T-cell (primary cell): ENCODE measurements at regions of chr5 and their contacts with region 1.

Region 1: DNA sequence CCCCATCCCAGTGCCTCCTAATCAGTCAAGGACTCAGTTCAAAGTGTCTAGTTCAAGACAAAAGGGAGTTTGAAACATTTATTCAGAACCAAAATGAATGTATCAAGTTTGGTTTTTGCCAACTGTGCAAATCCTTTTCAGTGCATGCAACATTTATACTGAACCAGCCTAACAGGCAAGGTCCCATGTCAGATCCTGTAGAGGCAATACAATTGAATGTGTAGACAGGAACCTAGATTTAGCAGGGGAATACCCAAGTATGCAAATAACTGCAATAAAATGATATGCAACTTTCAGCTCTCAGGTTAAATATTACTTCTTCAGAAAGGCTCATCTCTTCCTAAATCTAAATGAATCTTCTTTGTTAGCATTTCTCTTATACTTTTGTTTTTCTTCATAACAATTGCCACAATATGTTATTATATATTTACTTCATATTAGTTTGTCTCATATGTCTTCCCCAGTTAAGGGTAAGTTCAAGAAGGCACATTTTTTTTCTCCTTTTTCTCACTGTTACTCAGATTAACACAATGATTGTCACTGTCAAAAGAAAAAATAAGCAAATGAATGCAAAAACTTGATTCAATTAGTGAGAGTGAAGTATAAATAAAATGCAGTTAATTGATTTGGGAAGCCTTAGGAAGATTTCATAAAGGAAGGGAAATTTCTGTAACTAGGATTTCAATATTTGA is 163.9 kb upstream of the RASA1 start:
- DNase-seq: no peak
- ATAC-seq: no peak
- H3K4me3 ChIP-seq: no peak overlapping the region
- H3K4me3 Mint-ChIP-seq: no peak overlapping the region
- H3K27ac ChIP-seq: no peak overlapping the region
- H3K27ac Mint-ChIP-seq: peak overlapping the region in 1 of 2 donors; percentile 44
- H3K4me1 ChIP-seq: peaks cover 2% of the 10 kb centered on the region in 2 experiments
- H3K4me1 Mint-ChIP-seq: peaks cover 10 to 16% (median 16%) of the 10 kb centered on the region in 3 donors
- H3K27me3 ChIP-seq: no peaks in the 10 kb centered on the region
- H3K27me3 Mint-ChIP-seq: no peaks in the 10 kb centered on the region

Region 2: GRCh38 chr5:87048156-87048555 is 55.6 kb before region 1 on chr5:
- CTCF ChIA-PET with region 1: no interaction called
- POLR2A ChIA-PET with region 1: no interaction called
- DNase-seq: peak in 1 of 35 experiments; percentile 2
- ATAC-seq: no peak
- H3K4me3 ChIP-seq: no peak overlapping the region
- H3K4me3 Mint-ChIP-seq: no peak overlapping the region
- H3K27ac ChIP-seq: no peak overlapping the region
- H3K27ac Mint-ChIP-seq: no peak overlapping the region
- H3K4me1 ChIP-seq: no peaks in the 10 kb centered on the region
- H3K4me1 Mint-ChIP-seq: peaks cover 0 to 2% (median 0%) of the 10 kb centered on the region in 3 donors
- H3K27me3 ChIP-seq: no peaks in the 10 kb centered on the region
- H3K27me3 Mint-ChIP-seq: no peaks in the 10 kb centered on the region

Region 3: DNA sequence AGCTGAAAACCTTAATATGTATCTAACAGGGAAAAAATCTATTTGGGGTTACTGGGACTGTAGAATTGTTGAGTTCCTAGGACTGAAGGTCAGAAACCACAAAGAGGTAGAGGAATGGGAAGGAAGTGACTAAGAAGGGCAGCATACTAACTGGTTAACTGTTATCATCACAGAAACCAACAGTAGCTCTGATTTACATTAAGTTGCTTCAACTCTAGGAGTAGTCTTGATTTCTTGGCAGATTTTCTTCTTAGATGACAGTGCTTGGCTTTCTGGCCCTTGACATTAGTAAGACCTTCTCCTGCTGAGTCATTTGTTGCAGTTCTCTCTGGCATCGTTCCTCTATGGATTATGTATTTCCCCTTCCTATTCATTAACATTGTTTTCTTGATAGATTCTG is 47.8 kb after region 1 on chr5:
- CTCF ChIA-PET with region 1: no interaction called
- POLR2A ChIA-PET with region 1: no interaction called
- DNase-seq: no peak
- ATAC-seq: no peak
- H3K4me3 ChIP-seq: no peak overlapping the region
- H3K4me3 Mint-ChIP-seq: no peak overlapping the region
- H3K27ac ChIP-seq: no peak overlapping the region
- H3K27ac Mint-ChIP-seq: no peak overlapping the region
- H3K4me1 ChIP-seq: no peaks in the 10 kb centered on the region
- H3K4me1 Mint-ChIP-seq: peaks cover 2 to 8% (median 5%) of the 10 kb centered on the region in 3 donors
- H3K27me3 ChIP-seq: no peaks in the 10 kb centered on the region
- H3K27me3 Mint-ChIP-seq: no peaks in the 10 kb centered on the region

Region 4: GRCh38 chr5:87164409-87164808 is 60.7 kb after region 1 on chr5:
- CTCF ChIA-PET with region 1: no interaction called
- POLR2A ChIA-PET with region 1: interaction called in 1 of 2 experiments, 14 read pairs
- DNase-seq: no peak
- ATAC-seq: no peak
- H3K4me3 ChIP-seq: no peak overlapping the region
- H3K4me3 Mint-ChIP-seq: no peak overlapping the region
- H3K27ac ChIP-seq: no peak overlapping the region
- H3K27ac Mint-ChIP-seq: no peak overlapping the region
- H3K4me1 ChIP-seq: peaks cover 0 to 2% of the 10 kb centered on the region in 2 experiments
- H3K4me1 Mint-ChIP-seq: peaks cover 0 to 3% (median 3%) of the 10 kb centered on the region in 3 donors
- H3K27me3 ChIP-seq: no peaks in the 10 kb centered on the region
- H3K27me3 Mint-ChIP-seq: no peaks in the 10 kb centered on the region

Region 5: DNA sequence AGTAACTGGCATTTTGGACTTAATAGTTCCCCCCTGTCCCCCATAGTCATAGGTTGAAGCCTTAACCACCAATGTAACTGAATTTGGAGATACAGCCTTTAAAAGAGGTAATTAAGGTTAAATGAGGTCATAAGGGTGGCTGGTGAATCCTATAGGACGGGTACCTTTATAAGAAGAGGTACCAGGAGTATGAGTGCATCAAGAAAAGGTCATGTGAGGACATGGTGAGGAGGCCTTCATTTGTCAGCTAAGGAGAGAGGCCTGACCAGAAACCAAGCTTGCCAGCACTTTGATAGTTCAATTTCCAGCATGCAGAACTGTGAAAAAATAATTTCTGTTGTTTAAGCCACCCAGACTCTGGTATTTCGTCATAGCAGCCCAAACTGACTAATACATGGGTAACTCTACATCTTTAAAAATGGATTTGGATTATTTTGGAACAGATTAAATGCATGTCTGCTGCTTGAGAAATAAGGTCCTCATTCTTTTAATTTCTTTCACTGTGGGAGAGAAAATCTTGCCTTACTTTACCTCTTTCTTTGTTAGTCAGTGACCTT is 173.6 kb after region 1 on chr5:
- CTCF ChIA-PET with region 1: no interaction called
- POLR2A ChIA-PET with region 1: no interaction called
- DNase-seq: no peak
- ATAC-seq: no peak
- H3K4me3 ChIP-seq: no peak overlapping the region
- H3K4me3 Mint-ChIP-seq: no peak overlapping the region
- H3K27ac ChIP-seq: no peak overlapping the region
- H3K27ac Mint-ChIP-seq: peak overlapping the region; percentile 64 to 71
- H3K4me1 ChIP-seq: peaks cover 8% of the 10 kb centered on the region in 2 experiments
- H3K4me1 Mint-ChIP-seq: peaks cover 71 to 79% (median 78%) of the 10 kb centered on the region in 3 donors
- H3K27me3 ChIP-seq: no peaks in the 10 kb centered on the region
- H3K27me3 Mint-ChIP-seq: no peaks in the 10 kb centered on the region

Region 6: DNA sequence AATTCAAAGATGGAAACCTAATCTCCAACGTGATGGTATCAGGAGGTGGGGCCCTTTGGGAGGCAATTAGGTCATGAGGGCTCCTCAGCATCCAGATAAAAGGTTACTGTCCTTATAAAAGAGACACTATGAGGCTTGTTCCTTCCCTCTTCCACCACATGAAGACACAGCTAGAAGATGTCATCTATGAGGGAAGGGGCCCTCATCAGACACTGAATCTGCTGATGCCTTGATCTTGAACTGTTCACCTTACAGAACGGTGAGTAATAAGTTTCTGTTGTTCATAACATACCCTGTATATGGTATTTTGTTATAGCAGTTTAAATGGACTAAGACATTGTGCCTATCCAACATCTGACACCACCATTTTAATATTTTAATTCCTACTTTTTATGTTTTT is 328.7 kb after region 1 on chr5:
- CTCF ChIA-PET with region 1: no interaction called
- POLR2A ChIA-PET with region 1: no interaction called
- DNase-seq: no peak
- ATAC-seq: no peak
- H3K4me3 ChIP-seq: no peak overlapping the region
- H3K4me3 Mint-ChIP-seq: no peak overlapping the region
- H3K27ac ChIP-seq: no peak overlapping the region
- H3K27ac Mint-ChIP-seq: no peak overlapping the region
- H3K4me1 ChIP-seq: no peaks in the 10 kb centered on the region
- H3K4me1 Mint-ChIP-seq: no peaks in the 10 kb centered on the region
- H3K27me3 ChIP-seq: peaks cover 0 to 3% of the 10 kb centered on the region in 2 experiments
- H3K27me3 Mint-ChIP-seq: peaks cover 8 to 20% of the 10 kb centered on the region in 2 donors